Right ventricle myocardium inferior (tissue), 1 donor: ENCODE measurements at regions of chr3 and their contacts with region 1.

Region 1: DNA sequence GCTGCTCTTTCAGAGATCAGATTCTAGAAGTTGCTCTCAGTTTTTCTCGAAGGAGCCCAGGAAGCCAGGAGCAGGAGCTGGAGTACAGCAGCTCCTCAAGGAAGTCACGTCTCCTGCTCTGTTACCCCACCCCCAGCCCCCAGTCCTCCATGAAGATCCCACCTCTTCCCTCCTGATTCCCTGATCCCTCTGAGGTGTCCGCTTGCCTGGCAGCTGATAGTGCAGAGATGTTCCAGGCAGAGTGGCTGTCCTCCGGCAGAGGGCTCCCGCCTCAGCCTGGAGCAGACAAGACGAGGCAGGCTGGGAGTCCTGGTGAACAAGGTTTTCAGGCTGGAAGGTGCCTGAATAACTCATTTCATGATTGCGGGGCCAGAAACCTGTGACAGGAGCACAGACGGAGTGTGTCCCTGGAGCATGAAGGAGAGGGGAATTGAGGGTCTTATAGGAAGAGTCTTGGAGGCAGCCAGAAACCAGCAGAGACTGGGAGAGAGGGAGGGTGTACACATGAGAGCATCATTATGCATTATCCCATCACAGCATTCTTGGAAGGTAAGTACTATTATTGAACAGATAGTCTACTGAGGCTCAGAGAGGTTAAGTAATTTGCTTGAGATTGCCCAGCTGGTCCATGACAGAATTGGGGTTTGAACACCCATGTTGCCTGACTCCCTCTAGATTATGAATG is 1.2 kb downstream of the HRH1 start:
- DNase-seq: no peak
- ATAC-seq: peak; percentile 77

Region 2: DNA sequence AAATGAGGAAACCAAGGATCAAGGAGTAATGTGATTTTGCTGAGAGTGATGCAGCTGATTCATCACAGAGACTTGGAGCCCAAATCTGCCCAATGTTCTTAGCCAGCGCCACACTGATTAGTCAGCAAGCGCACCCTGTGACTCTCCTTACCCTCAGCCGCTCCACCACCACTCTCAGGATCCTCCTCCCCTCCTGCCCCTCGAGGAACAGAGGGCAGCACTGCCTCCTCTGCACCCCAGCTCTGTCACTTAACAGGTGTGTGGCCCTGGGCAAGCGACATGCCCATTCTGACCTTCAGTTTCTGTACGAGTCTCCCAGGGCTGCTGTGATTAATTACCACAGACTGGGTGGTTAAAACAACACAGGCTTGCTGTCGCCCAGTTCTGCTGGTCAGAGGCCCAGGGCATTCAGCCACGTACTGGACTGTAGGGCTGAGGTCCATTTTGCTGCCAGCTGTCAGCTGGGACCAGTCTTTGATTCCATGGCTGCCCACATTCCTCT is 37.3 kb before region 1 on chr3:
- intact Hi-C with region 1: no loop called
- DNase-seq: no peak
- ATAC-seq: peak; percentile 28

Region 3: GRCh38 chr3:11204697-11205348 is 49.3 kb after region 1 on chr3:
- intact Hi-C with region 1: loop called (anchors 1 kb)
- DNase-seq: no peak
- ATAC-seq: no peak

Region 4: GRCh38 chr3:11335056-11335608 is 179.6 kb after region 1 on chr3:
- intact Hi-C with region 1: loop called (anchors 5 kb)
- DNase-seq: no peak
- ATAC-seq: peak; percentile 67